Pancreas (tissue), 10 donors: ENCODE measurements at regions of chr1 and their contacts with region 1.

Region 1: GRCh38 chr1:92754000-92754718 is 30.7 kb downstream of the EVI5 start:
- DNase-seq: no peak
- ATAC-seq: peak in 1 of 4 donors; percentile 27
- H3K4me3 ChIP-seq: no peak overlapping the region
- H3K27ac ChIP-seq: no peak overlapping the region
- H3K4me1 ChIP-seq: peaks cover 0 to 5% (median 4%) of the 10 kb centered on the region in 3 donors
- H3K27me3 ChIP-seq: no peaks in the 10 kb centered on the region
- CTCF ChIP-seq: no peak

Region 2: DNA sequence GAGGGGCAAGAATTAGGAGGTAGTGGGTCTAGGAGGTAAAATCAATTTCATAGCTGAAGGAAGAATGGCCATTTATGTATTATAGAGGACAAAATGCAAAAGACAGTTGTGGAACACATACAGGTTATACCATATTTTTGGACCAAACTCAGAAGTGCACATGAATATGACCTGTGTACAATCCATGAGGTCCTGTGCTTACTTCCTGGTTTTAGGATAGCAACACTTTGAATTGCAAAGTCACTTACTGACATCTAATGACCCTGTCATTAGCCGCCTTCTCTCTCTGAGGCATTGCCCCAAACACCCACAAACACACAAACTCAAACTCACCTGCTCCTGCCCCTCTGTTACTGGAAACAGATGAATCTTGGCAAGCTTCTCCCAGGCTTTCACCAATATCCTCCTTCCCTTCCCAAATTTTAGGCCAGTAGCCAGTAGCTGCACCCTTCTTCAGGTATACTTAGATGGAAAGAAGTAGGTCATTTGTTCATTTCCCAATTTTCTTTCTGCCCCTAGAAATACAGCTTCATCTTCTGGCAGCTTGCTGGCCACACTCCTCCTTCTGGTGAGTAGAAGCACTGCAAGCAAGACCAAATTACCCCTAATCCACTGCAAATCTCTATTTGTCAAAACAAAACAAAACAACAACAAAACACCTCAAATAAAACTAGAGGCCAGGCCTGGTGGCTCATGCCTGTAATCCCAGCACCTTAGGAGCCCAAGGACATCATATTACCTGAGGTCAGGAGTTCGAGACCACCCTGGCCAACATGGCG is 64.0 kb after region 1 on chr1:
- intact Hi-C with region 1: loop called in 2 of 3 experiments (anchors 5 to 10 kb)
- DNase-seq: peak in 1 of 6 donors; percentile 36
- ATAC-seq: peak; percentile 67 to 87 (median 86)
- H3K4me3 ChIP-seq: no peak overlapping the region
- H3K27ac ChIP-seq: no peak overlapping the region
- H3K4me1 ChIP-seq: no peaks in the 10 kb centered on the region
- H3K27me3 ChIP-seq: no peaks in the 10 kb centered on the region
- CTCF ChIP-seq: peak in 3 of 4 donors; percentile 37 to 60 (median 57)

Region 3: GRCh38 chr1:93000751-93001175 is 246.6 kb after region 1 on chr1:
- intact Hi-C with region 1: no loop called
- DNase-seq: no peak
- ATAC-seq: peak in 3 of 4 donors; percentile 14 to 59 (median 48)
- H3K4me3 ChIP-seq: no peak overlapping the region
- H3K27ac ChIP-seq: no peak overlapping the region
- H3K4me1 ChIP-seq: peaks cover 4 to 13% (median 5%) of the 10 kb centered on the region in 3 donors
- H3K27me3 ChIP-seq: no peaks in the 10 kb centered on the region
- CTCF ChIP-seq: no peak